ENCODE measurements at regions of chr6 and their contacts with region 1.

Region 1: DNA sequence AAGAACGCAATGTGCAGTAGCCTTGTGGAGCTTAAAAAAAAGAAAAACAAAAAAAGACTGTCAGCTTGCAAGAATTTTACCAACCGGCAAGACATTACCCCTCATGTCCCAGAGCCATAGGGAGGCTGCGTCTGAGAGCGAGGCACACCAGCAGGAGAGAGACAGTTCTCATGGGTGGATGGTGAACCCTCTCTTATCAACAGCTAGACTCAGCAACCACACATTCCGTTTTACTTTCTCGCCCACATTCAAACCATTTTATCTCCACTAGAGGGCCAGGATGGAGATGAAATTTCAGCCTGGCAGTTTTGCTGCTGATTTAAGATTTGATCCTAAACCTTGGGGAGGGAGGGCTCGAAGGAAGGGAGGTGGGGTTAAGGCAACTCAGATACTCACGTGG is 247.0 kb downstream of the ATXN1 start:
- DNase-seq: peak; percentile 28
- H3K4me3 Mint-ChIP-seq: peak overlapping the region; percentile 45
- H3K27ac Mint-ChIP-seq: peak overlapping the region; percentile 60
- H3K4me1 Mint-ChIP-seq: peaks cover 78% of the 10 kb centered on the region
- H3K27me3 Mint-ChIP-seq: no peaks in the 10 kb centered on the region

Region 2: DNA sequence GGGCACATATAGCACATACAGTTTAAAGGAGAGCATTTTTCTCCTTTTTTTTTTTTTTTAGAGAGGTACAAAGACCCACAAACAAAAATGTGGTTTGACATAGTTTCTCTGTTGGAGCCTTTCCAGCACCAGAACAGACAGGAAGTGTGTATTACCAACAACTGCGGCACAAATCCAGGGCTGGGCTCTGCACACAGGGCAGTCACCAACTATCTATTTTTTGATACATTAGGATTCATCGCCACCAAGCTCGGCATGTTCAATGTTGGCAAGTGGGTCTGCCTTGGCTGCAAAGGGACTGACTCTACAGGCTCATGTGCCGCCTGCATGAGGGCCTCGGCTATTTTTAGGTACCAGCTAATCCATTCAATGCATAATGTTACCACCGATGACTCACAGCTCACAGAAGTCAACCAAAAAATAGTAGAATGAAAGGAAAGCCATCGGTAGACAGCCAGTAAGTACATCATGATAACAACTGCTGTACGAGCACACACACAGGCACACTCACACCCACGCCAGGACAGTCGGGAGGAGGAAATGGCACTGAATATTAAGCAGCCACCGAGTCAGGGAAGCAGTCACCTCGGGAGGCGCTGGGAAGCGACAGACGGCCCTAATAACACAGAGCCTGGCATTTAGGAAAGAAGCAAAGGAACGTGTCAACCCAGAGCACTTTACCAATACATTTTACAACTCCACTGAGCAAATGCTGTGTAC is 194.3 kb before region 1 on chr6:
- intact Hi-C with region 1: no loop called
- DNase-seq: peak; percentile 65
- H3K4me3 Mint-ChIP-seq: peak overlapping the region; percentile 56
- H3K27ac Mint-ChIP-seq: peak overlapping the region; percentile 81
- H3K4me1 Mint-ChIP-seq: peaks cover 76% of the 10 kb centered on the region
- H3K27me3 Mint-ChIP-seq: no peaks in the 10 kb centered on the region

Region 3: DNA sequence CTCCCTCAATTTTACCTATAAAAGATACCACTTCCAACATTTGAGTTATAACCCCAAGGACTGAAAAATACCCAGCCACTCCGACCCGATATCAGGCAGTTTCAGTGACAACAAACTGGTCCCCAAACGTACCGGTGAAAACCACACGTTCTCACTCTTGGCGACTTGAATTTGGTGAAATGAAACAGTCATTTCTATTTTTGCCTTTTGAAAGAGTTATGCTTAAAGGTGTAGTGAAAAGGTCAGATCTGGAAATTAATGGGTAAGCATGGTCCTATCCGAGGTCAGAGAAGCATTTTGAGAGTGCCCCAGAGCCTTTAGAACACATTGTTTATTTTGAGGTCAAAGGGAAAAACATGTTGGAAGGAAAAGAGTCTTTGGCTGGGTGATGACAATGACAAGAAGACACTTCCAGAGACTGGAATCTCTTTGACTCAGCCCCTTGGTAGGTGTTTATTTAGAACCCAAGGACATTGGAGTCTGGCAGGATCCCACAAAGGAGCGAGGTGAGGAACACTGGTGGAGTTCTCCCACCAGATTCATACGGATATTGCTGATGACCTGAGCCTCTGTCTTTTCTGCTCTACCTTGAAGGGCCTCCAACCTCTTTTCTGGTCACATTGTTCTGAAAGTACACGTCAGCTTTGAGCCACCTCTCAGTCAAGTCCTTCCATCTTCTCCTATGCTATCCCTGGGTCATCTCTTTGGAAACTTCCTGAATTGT is 40.9 kb before region 1 on chr6:
- intact Hi-C with region 1: loop called (anchors 1 kb)
- DNase-seq: peak; percentile 14
- H3K4me3 Mint-ChIP-seq: peak overlapping the region; percentile 66
- H3K27ac Mint-ChIP-seq: peak overlapping the region; percentile 93
- H3K4me1 Mint-ChIP-seq: peaks cover 82% of the 10 kb centered on the region
- H3K27me3 Mint-ChIP-seq: no peaks in the 10 kb centered on the region

Region 4: DNA sequence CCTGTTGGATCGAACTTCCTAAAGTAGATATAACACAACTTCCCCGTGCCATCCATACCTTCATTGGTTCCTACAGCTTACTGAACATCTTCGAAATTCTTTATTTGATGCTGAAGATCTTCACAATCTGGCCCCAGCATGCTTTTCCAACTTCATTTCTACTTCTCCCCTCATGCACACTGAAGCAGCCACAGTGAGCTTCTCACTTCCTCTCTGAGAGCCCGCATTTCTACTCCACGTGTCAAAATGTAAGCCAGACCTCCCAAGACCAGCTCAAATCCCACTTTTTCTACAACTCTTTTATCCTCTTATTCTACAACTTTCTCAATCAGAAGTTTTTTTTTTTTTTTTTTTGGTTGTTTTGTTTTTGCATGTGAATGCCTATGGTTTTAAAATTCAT is 21.1 kb before region 1 on chr6:
- intact Hi-C with region 1: no loop called
- DNase-seq: no peak
- H3K4me3 Mint-ChIP-seq: no peak overlapping the region
- H3K27ac Mint-ChIP-seq: no peak overlapping the region
- H3K4me1 Mint-ChIP-seq: peaks cover 84% of the 10 kb centered on the region
- H3K27me3 Mint-ChIP-seq: no peaks in the 10 kb centered on the region

Region 5: DNA sequence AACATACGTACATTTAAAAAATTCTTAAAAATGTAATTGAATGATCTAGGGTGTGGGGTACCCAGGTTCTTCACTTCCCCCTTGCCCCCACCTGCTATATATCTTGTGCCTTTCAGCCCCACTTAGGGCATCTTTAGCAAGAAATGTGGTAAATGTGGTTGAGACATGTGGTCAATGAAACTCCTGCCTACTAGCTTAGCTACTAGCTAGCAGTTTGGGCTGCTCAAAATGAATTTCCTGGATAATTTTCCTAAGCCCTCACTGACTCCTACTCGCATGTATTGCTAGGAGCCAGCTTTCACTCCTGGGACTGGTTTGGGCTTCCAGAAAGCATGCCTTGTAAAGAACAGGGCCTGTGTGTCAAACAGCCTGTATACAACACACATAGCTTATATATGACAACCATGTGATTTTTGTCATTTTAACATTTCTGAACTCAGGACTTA is 10.3 kb before region 1 on chr6:
- intact Hi-C with region 1: loop called (anchors 1 kb)
- DNase-seq: no peak
- H3K4me3 Mint-ChIP-seq: peak overlapping the region; percentile 26
- H3K27ac Mint-ChIP-seq: peak overlapping the region; percentile 75
- H3K4me1 Mint-ChIP-seq: peaks cover 55% of the 10 kb centered on the region
- H3K27me3 Mint-ChIP-seq: no peaks in the 10 kb centered on the region

Region 6: DNA sequence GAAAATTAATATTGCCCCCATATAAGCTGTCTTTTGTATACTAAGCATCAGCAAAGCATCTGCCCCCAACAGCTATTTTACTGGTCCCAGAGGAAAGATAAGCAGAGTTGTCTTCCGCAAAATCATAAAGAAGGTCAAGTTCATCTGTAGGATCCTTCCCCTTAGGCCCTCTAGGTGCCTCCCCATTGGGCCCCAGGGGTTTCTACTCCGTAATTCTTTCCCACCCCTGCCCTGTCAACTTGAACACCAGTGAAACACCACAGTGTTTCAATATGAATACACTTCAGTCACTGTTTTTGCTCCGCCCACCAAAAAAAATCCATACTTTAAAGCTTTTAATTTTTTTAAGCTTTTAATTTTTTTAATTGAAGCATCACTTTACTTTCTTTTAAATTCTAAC is 87.8 kb after region 1 on chr6:
- intact Hi-C with region 1: loop called (anchors 5 kb)
- DNase-seq: no peak
- H3K4me3 Mint-ChIP-seq: peak overlapping the region; percentile 28
- H3K27ac Mint-ChIP-seq: peak overlapping the region; percentile 75
- H3K4me1 Mint-ChIP-seq: peaks cover 49% of the 10 kb centered on the region
- H3K27me3 Mint-ChIP-seq: no peaks in the 10 kb centered on the region

Region 7: GRCh38 chr6:16712931-16713484 is 198.8 kb after region 1 on chr6:
- intact Hi-C with region 1: loop called (anchors 2 kb)
- DNase-seq: no peak
- H3K4me3 Mint-ChIP-seq: peak overlapping the region; percentile 60
- H3K27ac Mint-ChIP-seq: peak overlapping the region; percentile 88
- H3K4me1 Mint-ChIP-seq: peaks cover 65% of the 10 kb centered on the region
- H3K27me3 Mint-ChIP-seq: no peaks in the 10 kb centered on the region

Region 8: DNA sequence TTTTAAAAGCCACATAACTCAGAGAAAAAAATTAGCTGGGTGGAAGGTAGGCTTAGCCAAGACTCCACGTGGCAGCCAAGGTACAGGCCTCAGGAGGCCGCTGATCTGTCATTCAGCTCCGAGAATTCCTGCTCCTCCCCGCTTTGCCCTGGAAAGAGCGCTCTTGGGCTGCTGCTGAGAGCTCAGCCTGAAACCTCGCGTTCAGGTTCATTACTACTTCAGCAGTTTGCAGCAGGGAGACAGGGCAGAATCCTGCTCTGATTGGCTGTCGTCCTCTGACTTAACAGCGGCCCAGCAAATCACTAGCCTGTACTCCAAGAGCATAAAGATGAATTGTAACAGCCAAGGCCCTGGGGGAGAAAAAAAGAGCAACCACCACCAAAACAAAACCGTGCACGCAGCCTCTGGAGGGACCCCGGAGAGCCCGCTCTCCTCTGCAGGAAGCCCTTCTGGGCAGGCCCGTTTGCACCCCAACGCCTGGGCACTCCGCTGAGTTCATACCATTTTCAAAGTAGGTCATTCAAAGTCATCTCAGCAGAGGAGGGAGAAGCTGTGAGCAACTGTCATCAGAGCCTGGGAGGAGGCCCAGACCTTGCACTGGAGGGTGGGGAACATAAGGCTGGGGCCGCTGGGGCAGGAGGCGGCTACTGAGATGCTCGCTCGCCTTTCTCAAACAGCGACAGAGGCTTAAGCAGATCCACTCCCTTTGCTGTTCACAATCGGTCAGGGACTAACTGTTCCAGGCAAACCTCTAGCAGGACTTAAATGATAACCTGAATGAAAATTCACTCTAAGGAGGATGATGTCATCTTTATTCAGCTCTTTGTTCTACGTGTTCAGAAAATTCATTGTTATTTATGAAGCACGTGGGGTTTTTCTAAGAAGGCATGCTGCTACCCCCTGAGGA is 289.3 kb after region 1 on chr6:
- intact Hi-C with region 1: no loop called
- DNase-seq: no peak
- H3K4me3 Mint-ChIP-seq: no peak overlapping the region
- H3K27ac Mint-ChIP-seq: no peak overlapping the region
- H3K4me1 Mint-ChIP-seq: peaks cover 18% of the 10 kb centered on the region
- H3K27me3 Mint-ChIP-seq: peaks cover 8% of the 10 kb centered on the region

Region 9: GRCh38 chr6:16956361-16956760 is 442.1 kb after region 1 on chr6:
- intact Hi-C with region 1: loop called (anchors 10 kb)
- DNase-seq: no peak
- H3K4me3 Mint-ChIP-seq: no peak overlapping the region
- H3K27ac Mint-ChIP-seq: peak overlapping the region; percentile 59
- H3K4me1 Mint-ChIP-seq: peaks cover 14% of the 10 kb centered on the region
- H3K27me3 Mint-ChIP-seq: peaks cover 3% of the 10 kb centered on the region